ENCODE measurements at regions of chr5 and their contacts with region 1.

Region 1: DNA sequence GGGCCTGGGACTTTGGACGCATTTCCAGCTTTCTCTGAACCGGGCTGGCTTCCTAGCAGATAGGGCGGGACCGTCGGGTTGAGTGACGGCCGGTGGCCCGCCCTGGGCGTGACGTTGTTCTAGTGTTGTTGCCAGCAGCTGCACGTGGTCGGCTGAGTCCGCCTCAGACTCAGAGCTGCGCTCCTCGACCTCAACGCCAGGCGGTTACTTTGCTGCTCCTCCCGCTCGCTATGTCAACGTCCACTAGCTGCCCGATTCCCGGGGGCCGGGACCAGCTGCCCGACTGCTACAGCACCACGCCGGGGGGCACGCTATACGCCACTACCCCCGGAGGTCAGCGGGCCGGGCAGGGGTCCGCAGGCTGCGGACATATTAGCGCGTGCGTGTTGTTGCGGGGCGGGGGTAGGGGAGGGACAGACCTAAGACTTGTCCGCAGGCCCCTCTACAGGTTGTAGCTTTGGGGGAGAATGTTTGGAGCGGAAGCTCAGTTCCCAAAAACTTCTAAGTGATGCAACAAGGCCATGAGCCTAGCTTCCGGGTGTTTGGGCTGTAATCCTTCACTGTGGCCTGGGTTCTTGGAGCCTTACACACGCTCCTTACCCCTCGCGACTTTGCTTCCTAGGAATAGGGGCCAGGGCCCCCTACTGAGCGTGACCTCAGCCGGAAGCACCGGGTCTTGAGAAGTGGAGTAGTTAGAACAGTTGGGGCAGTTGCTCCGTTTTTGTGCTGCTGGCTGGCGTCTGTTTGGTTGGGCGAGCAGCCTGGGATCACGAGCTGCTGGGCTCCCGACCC is at the start of gene EIF4EBP3:
- DNase-seq: peak; percentile 98
- H3K4me3 ChIP-seq: peak within 1 kb of the TSS; percentile 0 to 55 (median 18)
- H3K27ac ChIP-seq: peak within 1 kb of the TSS; percentile 80 to 99 (median 92)
- H3K4me1 ChIP-seq: peaks cover 23 to 30% of the 10 kb centered on the region in 2 donors
- H3K27me3 ChIP-seq: no peaks in the 10 kb centered on the region
- CTCF ChIP-seq: peak in 5 of 6 experiments; percentile 60 to 87 (median 73)
- POLR2A ChIP-seq: peak; percentile 86 to 94
- total RNA-seq, gene EIF4EBP3: 9.1 to 18.9 (median 15.6) TPM

Region 2: GRCh38 chr5:140647042-140647341 is 99.3 kb after region 1 on chr5:
- intact Hi-C with region 1: loop called (anchors 5 kb)
- DNase-seq: no peak
- H3K4me3 ChIP-seq: peak overlapping the region; percentile 37 to 83 (median 71)
- H3K27ac ChIP-seq: peak overlapping the region; percentile 7 to 71 (median 42)
- H3K4me1 ChIP-seq: peaks cover 15 to 16% of the 10 kb centered on the region in 2 donors
- H3K27me3 ChIP-seq: no peaks in the 10 kb centered on the region
- CTCF ChIP-seq: no peak
- POLR2A ChIP-seq: no peak

Measured in thyroid gland (tissue), 4 donors.